Dorsolateral prefrontal cortex (tissue), 120 donors: ENCODE measurements at regions of chr1 and their contacts with region 1.

Region 1: DNA sequence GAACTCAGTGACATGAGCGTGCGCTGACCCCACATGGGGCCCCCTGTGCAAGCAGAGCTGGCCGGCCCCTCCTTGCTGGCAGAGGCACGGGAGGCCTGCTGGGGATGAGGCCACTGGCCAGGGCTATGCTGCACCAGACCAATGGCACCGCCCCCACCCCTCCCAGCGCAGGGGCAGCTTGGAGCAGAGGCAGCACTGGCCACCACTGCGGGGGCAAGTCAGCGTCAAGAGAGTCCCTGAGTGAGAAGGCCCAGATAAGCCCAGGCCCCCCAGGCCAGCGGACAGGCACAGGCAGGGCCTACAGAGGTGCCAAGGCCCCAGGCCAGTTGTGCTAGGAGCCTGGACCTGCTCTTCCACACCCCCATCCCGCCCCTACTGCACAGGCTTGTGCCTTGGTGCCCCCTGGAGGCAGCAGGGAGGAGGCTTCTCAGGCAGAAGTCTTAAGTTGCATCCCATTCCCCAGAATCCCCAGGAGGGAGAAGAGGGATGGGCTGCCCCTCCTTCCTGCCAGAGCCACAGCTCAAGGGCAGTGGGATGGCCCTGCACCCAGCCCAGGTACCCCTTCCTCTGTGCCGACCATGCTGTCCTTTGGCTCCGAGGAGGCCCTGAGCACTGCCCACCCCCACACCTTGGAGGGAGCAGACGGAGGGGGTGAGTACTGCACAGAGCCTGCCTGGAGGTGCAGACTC is 35.8 kb downstream of the EPHX1 start:
- DNase-seq: peak in 8 of 10 donors; percentile 21 to 71 (median 48)
- H3K4me3 ChIP-seq: no peak overlapping the region
- H3K27ac ChIP-seq: peak overlapping the region in 58 of 59 donors; percentile 22 to 99 (median 93)
- H3K27me3 ChIP-seq: no peaks in the 10 kb centered on the region
- CTCF ChIP-seq: peak; percentile 24 to 78 (median 58)

Region 2: DNA sequence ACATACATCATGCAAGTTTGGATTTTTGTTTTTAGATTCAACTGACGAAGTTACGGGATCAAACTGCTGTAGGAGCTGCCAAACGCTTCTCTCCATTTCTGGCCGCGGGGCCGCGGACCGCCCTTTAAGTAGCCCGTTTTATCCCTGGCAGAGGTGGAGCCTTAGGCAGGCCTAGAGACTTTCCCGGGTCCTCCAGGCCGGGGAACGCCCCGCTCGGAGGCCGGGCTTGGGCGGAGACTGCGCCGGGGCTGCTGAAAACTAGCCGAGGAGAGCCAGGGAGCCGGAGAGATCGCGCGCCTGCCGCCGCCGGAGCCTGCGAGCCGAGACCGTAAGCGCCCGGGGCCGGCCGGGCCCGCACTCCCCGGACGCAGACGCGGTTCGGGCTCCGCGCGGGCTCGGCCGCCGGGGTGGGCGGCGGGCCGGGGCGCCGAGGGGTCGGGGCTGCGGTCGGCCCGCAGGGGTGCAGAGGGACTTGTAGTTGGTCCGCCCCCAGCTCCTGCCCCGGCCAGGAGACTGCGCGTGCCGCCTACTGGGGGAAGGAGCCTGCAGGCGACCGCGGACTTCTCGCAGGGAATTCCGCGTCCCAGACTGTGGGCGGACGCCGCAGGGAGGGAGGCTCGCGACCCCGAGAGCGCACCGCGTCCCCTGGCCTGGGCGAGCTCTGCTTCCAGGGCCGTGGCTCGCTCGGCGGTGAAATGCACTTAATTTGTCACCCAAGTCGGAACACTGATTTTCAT is 35.7 kb before region 1 on chr1 and contains the start of gene EPHX1:
- intact Hi-C with region 1: loop called in 1 of 2 experiments (anchors 5 kb)
- DNase-seq: peak; percentile 75 to 91 (median 82)
- H3K4me3 ChIP-seq: peak within 1 kb of the TSS; percentile 66 to 88 (median 78)
- H3K27ac ChIP-seq: peak within 1 kb of the TSS; percentile 35 to 97 (median 82)
- H3K27me3 ChIP-seq: no peaks in the 10 kb centered on the region
- CTCF ChIP-seq: peak in 35 of 56 donors; percentile 6 to 60 (median 30)
- total RNA-seq, gene EPHX1: 56.7 to 268 (median 111) TPM

Region 3: GRCh38 chr1:225923692-225924555 is 78.2 kb after region 1 on chr1 and contains the start of gene PYCR2:
- intact Hi-C with region 1: loop called in 1 of 2 experiments (anchors 5 kb)
- DNase-seq: peak; percentile 89 to 98 (median 94)
- H3K4me3 ChIP-seq: peak within 1 kb of the TSS; percentile 66 to 100 (median 94)
- H3K27ac ChIP-seq: peak within 1 kb of the TSS; percentile 35 to 98 (median 91)
- H3K27me3 ChIP-seq: no peaks in the 10 kb centered on the region
- CTCF ChIP-seq: peak in 32 of 56 donors; percentile 4 to 61 (median 30)
- total RNA-seq, gene PYCR2: 44.8 to 116 (median 65.6) TPM